Mammary epithelial cell (primary cell): ENCODE measurements at regions of chr4 and their contacts with region 1.

Region 1: GRCh38 chr4:140252742-140253555 is 99.0 kb upstream of the MAML3 start:
- DNase-seq: peak; percentile 58
- H3K4me3 ChIP-seq: peak overlapping the region; percentile 32 to 66 (median 52)
- H3K27ac ChIP-seq: no peak overlapping the region
- H3K4me1 ChIP-seq: peaks cover 17% of the 10 kb centered on the region
- H3K27me3 ChIP-seq: no peaks in the 10 kb centered on the region
- CTCF ChIP-seq: peak; percentile 60 to 84

Region 2: DNA sequence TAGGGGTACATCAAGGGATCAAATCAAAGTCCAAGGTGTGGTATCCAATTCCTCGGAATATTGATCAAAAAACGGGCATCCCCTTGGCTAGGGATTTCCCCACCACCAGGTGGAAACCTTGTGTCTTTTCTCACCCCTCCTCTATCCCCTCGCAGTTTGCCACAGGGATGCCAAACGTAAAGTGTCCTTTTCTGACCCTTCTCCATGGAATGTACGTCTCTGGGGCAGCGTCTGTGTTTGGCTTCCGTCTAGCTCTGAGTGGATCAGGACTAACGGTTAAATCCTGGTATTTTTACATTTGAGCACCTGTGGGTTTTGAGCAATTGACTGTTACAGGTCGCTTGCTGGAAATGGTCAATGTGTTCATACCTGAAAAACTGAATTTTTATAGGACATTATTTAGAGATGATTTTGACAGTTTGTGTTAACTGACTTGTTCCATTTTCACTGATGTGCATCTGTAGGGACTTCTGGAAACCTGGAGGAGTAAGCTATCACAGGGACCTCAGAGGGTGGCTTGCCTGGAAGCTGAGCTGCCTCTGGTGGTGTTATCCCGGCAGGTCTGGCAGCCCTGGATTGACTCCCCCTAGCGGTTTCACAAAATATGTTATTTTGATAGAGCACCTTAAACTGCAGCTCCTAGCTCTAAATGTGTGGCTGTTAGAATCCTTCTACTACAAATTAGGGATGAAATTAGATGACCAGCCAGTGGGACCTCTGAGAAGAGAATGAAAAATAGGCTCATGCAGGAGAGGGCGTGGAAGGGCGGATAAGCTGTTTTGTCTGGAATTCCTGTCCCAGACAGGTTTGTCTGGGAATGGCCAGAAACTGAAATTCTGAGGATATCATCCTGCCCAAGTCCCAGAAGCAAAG is 596.1 kb before region 1 on chr4:
- CTCF ChIA-PET with region 1: no interaction called
- dilution Hi-C with region 1: no loop called
- in situ Hi-C with region 1: loop called in 1 of 2 experiments (anchors 25 kb)
- intact Hi-C with region 1: loop called (anchors 1 kb)
- DNase-seq: peak; percentile 73
- H3K4me3 ChIP-seq: peak overlapping the region in 1 of 3 experiments; percentile 14
- H3K27ac ChIP-seq: peak overlapping the region; percentile 75
- H3K4me1 ChIP-seq: peaks cover 28% of the 10 kb centered on the region
- H3K27me3 ChIP-seq: no peaks in the 10 kb centered on the region
- CTCF ChIP-seq: peak; percentile 94 to 96

Region 3: GRCh38 chr4:139887962-139888735 is 364.8 kb before region 1 on chr4:
- CTCF ChIA-PET with region 1: no interaction called
- dilution Hi-C with region 1: no loop called
- in situ Hi-C with region 1: no loop called
- intact Hi-C with region 1: loop called (anchors 5 kb)
- DNase-seq: peak; percentile 97
- H3K4me3 ChIP-seq: peak overlapping the region in 2 of 3 experiments; percentile 49 to 54
- H3K27ac ChIP-seq: peak overlapping the region; percentile 84
- H3K4me1 ChIP-seq: peaks cover 41% of the 10 kb centered on the region
- H3K27me3 ChIP-seq: no peaks in the 10 kb centered on the region
- CTCF ChIP-seq: no peak

Region 4: GRCh38 chr4:140052050-140052449 is 200.9 kb before region 1 on chr4:
- CTCF ChIA-PET with region 1: interaction called, 6 read pairs
- dilution Hi-C with region 1: no loop called
- in situ Hi-C with region 1: no loop called
- intact Hi-C with region 1: loop called (anchors 1 kb)
- DNase-seq: peak; percentile 29
- H3K4me3 ChIP-seq: no peak overlapping the region
- H3K27ac ChIP-seq: no peak overlapping the region
- H3K4me1 ChIP-seq: peaks cover 7% of the 10 kb centered on the region
- H3K27me3 ChIP-seq: no peaks in the 10 kb centered on the region
- CTCF ChIP-seq: peak; percentile 49 to 80

Region 5: DNA sequence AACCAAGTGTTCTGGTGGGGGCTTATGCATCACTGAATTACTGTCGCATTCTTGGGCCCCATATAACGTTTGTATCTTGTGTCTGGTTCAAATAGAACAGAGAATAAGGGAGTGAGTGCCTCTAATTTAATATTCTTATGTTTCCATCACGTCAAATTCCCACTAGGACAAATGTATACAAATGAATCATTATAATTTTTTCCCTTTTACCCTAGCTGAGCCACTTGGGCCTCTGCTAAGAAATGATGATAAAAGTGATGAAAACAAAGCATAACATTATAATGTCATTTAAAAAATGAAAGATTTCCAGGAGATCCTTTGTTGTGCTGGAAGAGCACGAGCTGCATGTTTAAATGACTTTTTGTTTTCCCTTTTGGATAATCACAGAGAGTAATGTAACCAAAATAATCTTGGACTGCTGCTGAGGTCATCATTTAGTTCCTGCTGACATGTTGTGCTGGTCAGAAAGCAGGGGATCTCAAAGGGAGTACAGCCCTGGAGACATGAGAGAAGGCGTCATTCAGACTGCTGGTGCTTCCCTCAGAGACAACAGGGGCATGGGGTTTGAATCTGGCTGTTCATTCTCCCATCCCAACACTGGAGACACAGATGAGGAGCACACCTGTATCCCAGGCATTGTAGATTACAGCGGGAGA is 15.4 kb after region 1 on chr4:
- CTCF ChIA-PET with region 1: no interaction called
- dilution Hi-C with region 1: no loop called
- in situ Hi-C with region 1: no loop called
- intact Hi-C with region 1: no loop called
- DNase-seq: no peak
- H3K4me3 ChIP-seq: no peak overlapping the region
- H3K27ac ChIP-seq: no peak overlapping the region
- H3K4me1 ChIP-seq: no peaks in the 10 kb centered on the region
- H3K27me3 ChIP-seq: no peaks in the 10 kb centered on the region
- CTCF ChIP-seq: no peak

Region 6: DNA sequence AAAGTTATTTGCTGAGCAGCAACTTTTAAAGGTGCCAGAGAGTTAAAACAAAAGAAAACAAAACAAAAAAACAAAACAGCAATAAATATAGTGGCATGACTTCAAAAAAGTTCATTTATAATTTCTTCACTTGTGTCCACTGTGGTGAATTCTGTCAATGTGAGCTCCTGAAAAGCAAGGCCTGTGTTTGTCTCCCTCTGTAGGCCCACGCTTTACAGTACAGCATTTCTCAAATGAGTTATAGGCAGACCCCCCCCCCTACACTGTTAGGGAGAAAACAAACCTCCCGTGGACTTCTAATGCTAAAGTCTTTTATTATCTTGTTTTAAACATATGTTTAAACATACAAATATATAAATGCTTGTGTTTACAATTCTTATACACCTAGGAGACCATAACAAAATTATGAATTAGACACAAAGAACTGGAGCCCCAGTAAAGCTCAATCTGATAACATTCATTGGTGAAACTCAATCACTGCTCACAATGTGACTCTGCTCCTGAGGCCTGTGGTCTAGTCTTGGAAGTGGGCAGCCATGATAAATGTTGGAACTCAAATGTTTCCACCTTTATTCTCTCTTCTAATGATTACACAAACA is 73.5 kb after region 1 on chr4:
- CTCF ChIA-PET with region 1: no interaction called
- dilution Hi-C with region 1: no loop called
- in situ Hi-C with region 1: no loop called
- intact Hi-C with region 1: loop called (anchors 1 kb)
- DNase-seq: peak; percentile 22
- H3K4me3 ChIP-seq: no peak overlapping the region
- H3K27ac ChIP-seq: no peak overlapping the region
- H3K4me1 ChIP-seq: no peaks in the 10 kb centered on the region
- H3K27me3 ChIP-seq: no peaks in the 10 kb centered on the region
- CTCF ChIP-seq: peak; percentile 74 to 86

Region 7: GRCh38 chr4:140359562-140360427 is 106.8 kb after region 1 on chr4:
- CTCF ChIA-PET with region 1: interaction called, 11 read pairs
- dilution Hi-C with region 1: loop called (anchors 5 kb)
- in situ Hi-C with region 1: no loop called
- intact Hi-C with region 1: no loop called
- DNase-seq: peak; percentile 71
- H3K4me3 ChIP-seq: no peak overlapping the region
- H3K27ac ChIP-seq: no peak overlapping the region
- H3K4me1 ChIP-seq: no peaks in the 10 kb centered on the region
- H3K27me3 ChIP-seq: peaks cover 3% of the 10 kb centered on the region
- CTCF ChIP-seq: peak; percentile 78 to 82